Activated CD8-positive, alpha-beta T cell treated with anti-CD3 and anti-CD28 coated beads, Interleukin-2, amount 10 ng/mL, durations not matched to agents 7 days and 5 days (primary cell): ENCODE measurements at regions of chr4 and their contacts with region 1.

Region 1: DNA sequence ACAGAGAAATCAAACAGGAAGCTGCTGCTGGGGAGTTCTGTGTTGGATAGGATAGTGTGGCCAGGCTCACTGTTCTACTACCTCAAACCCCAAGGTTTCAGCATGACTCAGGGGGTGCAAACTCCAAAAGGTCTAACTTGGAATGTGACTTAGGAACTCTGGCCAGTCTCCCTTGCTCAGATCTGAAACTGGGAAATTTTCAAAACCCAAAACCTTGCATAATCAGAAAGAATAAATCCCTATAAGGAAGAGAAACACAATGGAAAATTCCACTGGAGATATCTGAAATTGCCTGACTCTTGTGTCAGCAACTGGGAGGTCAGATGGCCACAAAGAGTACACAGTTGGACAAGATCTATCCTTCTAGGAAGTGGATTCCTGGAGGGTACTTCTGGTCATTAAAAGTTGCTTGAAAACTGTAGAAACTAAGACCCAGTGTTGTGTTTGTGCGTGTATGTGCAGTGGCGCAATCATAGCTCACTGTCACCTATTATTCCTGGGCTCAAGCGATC is 58.0 kb downstream of the PPEF2 start:
- DNase-seq: no peak
- ATAC-seq: no peak
- H3K4me3 Mint-ChIP-seq: no peak overlapping the region
- H3K27ac Mint-ChIP-seq: no peak overlapping the region
- H3K4me1 Mint-ChIP-seq: peaks cover 5% of the 10 kb centered on the region
- H3K27me3 Mint-ChIP-seq: no peaks in the 10 kb centered on the region

Region 2: GRCh38 chr4:75565481-75565880 is 278.7 kb before region 1 on chr4:
- CTCF ChIA-PET with region 1: interaction called, 14 read pairs
- POLR2A ChIA-PET with region 1: no interaction called
- DNase-seq: no peak
- ATAC-seq: no peak
- H3K4me3 Mint-ChIP-seq: no peak overlapping the region
- H3K27ac Mint-ChIP-seq: no peak overlapping the region
- H3K4me1 Mint-ChIP-seq: peaks cover 9% of the 10 kb centered on the region
- H3K27me3 Mint-ChIP-seq: peaks cover 9% of the 10 kb centered on the region